ENCODE measurements at regions of chr3 and their contacts with region 1.

Region 1: GRCh38 chr3:194769020-194769643 is 83.4 kb downstream of the FAM43A start:
- DNase-seq: peak; percentile 86 to 96
- ATAC-seq: peak; percentile 98 to 99 (median 98)
- H3K4me3 ChIP-seq: peak overlapping the region; percentile 6 to 55 (median 46)
- H3K27ac ChIP-seq: peak overlapping the region in 9 of 10 donors; percentile 11 to 82 (median 60)
- H3K4me1 ChIP-seq: peaks cover 6 to 42% (median 22%) of the 10 kb centered on the region in 9 donors
- H3K27me3 ChIP-seq: no peaks in the 10 kb centered on the region
- CTCF ChIP-seq: no peak

Region 2: DNA sequence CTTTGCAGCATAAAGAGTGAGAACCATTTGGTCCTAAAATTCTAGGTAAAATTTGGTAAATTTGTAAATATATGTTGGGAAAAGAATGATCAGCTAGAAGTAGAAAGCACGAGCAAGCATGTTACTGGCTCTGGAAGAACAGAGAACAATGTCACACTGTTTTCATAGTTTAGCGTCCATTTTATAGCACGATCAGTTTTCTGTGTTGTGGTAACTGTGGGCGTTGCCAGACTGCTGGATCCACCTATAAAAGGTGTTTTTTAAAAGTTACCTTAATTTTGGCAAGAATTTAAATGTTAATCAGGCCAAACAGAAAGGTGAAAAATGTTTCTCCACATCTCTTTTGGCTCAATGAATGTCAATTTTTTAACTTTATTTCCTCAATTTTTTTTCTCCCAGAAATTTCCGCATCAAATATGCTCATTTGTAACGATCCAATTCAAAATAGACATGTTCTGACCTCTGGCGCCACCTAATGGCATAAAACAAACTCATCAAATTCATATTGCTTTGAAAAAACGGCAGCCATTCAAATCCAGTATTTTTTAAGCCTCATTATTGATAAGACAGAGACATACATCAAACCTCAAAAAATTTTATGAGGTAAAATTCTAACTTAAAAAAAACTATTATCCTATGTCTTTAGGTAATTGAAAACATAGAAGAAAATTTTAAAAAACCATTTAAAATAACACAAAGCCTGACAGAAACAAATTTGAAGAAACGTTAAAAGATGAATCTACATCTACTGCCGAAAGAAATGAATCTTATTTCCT is 364.6 kb before region 1 on chr3:
- intact Hi-C with region 1: loop called in 1 of 10 experiments (anchors 10 kb)
- DNase-seq: peak in 1 of 2 donors; percentile 48
- ATAC-seq: no peak
- H3K4me3 ChIP-seq: no peak overlapping the region
- H3K27ac ChIP-seq: no peak overlapping the region
- H3K4me1 ChIP-seq: no peaks in the 10 kb centered on the region
- H3K27me3 ChIP-seq: peaks cover 0 to 7% (median 0%) of the 10 kb centered on the region in 7 donors
- CTCF ChIP-seq: peak; percentile 52 to 81 (median 74)

Region 3: GRCh38 chr3:194691481-194692283 is 77.5 kb before region 1 on chr3:
- intact Hi-C with region 1: loop called in 5 of 10 experiments (anchors 2 to 10 kb)
- DNase-seq: no peak
- ATAC-seq: no peak
- H3K4me3 ChIP-seq: no peak overlapping the region
- H3K27ac ChIP-seq: peak overlapping the region in 6 of 10 donors; percentile 2 to 96 (median 28)
- H3K4me1 ChIP-seq: peaks cover 12 to 64% (median 42%) of the 10 kb centered on the region in 9 donors
- H3K27me3 ChIP-seq: no peaks in the 10 kb centered on the region
- CTCF ChIP-seq: no peak

Region 4: DNA sequence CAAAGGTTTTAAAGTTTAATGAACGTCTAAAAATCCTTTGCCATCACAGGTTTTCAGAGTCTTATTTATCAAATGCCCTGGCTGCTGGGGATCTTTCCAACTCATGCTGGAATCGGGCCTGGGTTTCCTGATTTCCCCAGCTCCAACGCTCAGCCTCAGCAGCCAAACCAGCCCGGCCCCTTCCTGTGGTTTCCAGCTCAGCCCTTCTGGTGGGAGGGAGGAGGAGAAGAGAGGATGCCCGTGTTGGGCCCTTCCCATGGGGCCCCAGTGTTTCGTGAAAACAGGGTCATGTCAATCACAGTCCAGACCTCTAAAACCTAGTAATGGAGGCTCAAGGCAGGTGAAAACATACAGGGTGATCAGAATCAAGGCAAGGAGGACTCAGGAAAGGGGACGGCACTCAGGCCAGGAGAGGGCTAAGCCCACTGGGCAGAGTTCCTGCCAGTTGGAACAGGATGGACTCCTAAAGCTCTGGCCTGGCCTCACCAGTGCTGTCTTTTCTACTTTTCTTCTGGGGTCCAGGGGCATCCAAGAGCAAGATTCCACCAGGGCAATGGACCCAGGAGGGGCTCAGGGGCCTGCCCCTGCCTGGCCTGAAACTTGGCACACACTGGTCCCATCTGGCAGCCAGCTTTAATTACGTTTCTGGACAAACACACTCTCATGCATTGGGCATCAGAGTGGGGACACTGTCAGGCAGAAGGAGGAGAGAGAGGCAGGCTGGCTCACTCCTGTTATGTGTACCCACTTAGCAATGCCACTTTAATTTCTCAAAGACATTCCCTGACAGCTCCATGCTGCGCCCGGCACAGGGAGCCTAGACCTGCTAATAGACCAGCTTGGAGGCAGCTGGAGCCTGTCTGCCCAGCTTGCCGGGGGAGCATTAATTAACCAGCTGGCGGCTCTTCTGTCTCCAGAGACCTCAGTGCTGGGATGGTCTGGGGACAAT is 111.1 kb after region 1 on chr3:
- intact Hi-C with region 1: loop called in 1 of 10 experiments (anchors 5 kb)
- DNase-seq: peak; percentile 75 to 84
- ATAC-seq: peak; percentile 64 to 86 (median 76)
- H3K4me3 ChIP-seq: no peak overlapping the region
- H3K27ac ChIP-seq: peak overlapping the region; percentile 32 to 91 (median 81)
- H3K4me1 ChIP-seq: peaks cover 29 to 87% (median 64%) of the 10 kb centered on the region in 9 donors
- H3K27me3 ChIP-seq: no peaks in the 10 kb centered on the region
- CTCF ChIP-seq: no peak

Region 5: GRCh38 chr3:194952841-194953241 is 183.7 kb after region 1 on chr3:
- intact Hi-C with region 1: loop called in 1 of 10 experiments (anchors 5 kb)
- DNase-seq: peak in 1 of 2 donors; percentile 48
- ATAC-seq: peak; percentile 52 to 84 (median 76)
- H3K4me3 ChIP-seq: no peak overlapping the region
- H3K27ac ChIP-seq: peak overlapping the region in 9 of 10 donors; percentile 24 to 81 (median 49)
- H3K4me1 ChIP-seq: peaks cover 7 to 47% (median 24%) of the 10 kb centered on the region in 9 donors
- H3K27me3 ChIP-seq: no peaks in the 10 kb centered on the region
- CTCF ChIP-seq: no peak

Region 6: DNA sequence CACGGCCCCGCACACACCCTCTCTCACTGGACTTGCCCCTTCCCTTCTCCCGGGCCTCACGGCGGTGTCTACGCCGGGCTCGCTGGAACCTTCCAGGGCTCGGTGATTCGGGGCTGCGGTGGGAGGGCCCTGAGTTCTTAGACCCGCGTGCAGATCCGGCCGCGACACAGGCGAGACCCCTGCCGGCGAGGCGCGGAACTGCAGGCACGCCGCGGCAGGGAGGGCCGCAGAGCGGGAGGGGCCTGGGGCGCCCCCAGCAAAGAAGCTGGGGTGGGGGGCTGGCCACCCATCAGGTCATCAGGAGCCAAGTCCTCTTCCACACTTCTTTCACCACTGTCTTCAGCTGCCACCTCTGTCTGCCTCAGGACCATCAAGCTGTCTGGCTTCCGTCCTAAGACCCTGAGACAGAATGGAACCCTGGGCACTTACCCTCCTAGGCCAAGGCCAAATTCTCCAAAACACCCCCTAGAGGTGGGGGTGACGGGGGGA is 337.3 kb after region 1 on chr3:
- intact Hi-C with region 1: loop called in 1 of 10 experiments (anchors 10 kb)
- DNase-seq: peak; percentile 66 to 80
- ATAC-seq: peak; percentile 65 to 86 (median 80)
- H3K4me3 ChIP-seq: peak overlapping the region in 7 of 10 donors; percentile 2 to 44 (median 32)
- H3K27ac ChIP-seq: peak overlapping the region in 2 of 10 donors; percentile 10 to 44
- H3K4me1 ChIP-seq: peaks cover 7 to 41% (median 19%) of the 10 kb centered on the region in 9 donors
- H3K27me3 ChIP-seq: no peaks in the 10 kb centered on the region
- CTCF ChIP-seq: peak; percentile 99 to 100 (median 100)

Measured in heart right ventricle (tissue), 16 donors.